Mammary epithelial cell (primary cell): ENCODE measurements at regions of chr7 and their contacts with region 1.

Region 1: DNA sequence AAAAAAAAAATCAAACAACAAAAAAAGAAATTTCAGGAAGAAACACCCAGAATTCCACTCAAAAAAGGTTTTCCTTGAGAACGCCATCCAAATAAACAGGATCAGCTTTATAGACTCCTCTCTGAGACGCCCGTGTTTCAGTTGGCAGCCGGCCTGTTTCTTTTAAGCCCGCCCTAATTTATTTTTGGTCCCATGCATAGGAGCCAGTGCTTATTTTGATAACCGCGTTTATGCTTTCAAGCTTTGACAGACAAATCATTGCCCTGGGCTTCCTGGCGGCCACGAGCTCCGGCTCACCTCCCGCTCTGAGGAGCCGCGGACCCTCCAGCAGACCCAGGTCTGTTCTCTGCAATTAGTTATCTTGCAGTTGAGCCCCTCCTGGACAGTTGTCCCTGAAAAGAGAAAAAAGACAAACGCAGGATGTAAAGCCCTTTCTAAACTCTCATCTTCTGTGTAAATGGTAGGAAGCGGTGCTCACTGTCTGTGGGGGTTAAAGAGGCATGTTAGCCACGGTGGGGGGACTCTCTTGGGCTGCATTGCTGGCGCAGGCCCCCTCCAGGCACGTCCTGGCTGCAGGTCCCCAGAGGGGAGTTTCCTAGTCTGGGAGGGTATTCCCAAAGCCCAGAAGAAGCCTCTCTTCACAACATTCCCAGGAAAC is 22.2 kb upstream of the UNCX start:
- DNase-seq: no peak
- H3K4me3 ChIP-seq: no peak overlapping the region
- H3K27ac ChIP-seq: no peak overlapping the region
- H3K4me1 ChIP-seq: peaks cover 5% of the 10 kb centered on the region
- H3K27me3 ChIP-seq: peaks cover 29% of the 10 kb centered on the region
- CTCF ChIP-seq: no peak

Region 2: DNA sequence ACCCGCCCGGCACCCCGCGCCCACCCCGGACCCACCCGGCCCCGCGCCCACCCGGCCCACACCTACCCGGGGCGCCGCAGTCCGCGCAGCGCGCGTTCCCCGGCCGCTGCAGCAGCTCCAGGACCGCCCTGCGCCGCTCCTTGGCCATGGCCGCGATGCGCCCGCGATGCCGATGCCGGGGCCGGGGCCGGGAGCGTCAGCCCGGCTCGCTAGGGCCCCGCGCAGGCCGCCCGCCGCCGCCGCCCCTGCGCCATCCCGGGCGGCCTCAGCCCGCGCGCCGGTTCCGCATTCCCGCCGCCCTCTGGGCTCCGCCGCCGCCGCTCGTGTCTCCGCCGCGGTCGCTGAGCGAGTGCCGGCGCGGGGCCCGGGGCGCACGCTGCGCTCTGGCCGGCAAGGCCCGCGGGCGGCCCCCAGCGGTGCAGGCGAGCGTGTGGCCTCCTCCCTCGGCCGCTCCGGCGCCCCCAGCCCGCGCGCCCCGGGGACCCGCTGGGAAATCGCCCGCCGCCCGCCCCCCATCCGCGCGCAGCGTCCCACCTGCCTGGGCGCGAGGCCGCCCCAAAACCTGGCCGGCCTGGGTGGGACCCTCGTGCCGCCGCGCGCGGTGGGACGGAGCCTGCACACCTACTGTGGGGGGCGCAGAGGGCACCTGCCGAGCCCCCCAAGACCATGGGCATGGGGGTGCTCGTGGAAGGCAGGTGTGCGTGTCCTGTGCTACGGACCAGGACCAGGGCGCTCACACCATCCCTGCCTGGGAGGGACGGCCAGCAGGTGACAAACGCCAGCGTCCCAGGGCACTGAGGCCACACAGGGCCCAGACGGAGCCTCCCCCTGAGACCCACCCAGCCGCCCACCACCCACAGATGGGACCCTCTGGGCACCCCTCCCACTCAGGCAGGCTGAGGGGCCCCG is 255.9 kb before region 1 on chr7 and contains the start of gene ADAP1:
- CTCF ChIA-PET with region 1: no interaction called
- dilution Hi-C with region 1: no loop called
- in situ Hi-C with region 1: no loop called
- intact Hi-C with region 1: no loop called
- DNase-seq: peak; percentile 41
- H3K4me3 ChIP-seq: peak within 1 kb of the TSS; percentile 59 to 68 (median 66)
- H3K27ac ChIP-seq: no peak within 1 kb of the TSS
- H3K4me1 ChIP-seq: peaks cover 14% of the 10 kb centered on the region
- H3K27me3 ChIP-seq: no peaks in the 10 kb centered on the region
- CTCF ChIP-seq: peak in 1 of 2 donors; percentile 41
- total RNA-seq, gene ADAP1: 11.0 to 21.4 TPM

Region 3: DNA sequence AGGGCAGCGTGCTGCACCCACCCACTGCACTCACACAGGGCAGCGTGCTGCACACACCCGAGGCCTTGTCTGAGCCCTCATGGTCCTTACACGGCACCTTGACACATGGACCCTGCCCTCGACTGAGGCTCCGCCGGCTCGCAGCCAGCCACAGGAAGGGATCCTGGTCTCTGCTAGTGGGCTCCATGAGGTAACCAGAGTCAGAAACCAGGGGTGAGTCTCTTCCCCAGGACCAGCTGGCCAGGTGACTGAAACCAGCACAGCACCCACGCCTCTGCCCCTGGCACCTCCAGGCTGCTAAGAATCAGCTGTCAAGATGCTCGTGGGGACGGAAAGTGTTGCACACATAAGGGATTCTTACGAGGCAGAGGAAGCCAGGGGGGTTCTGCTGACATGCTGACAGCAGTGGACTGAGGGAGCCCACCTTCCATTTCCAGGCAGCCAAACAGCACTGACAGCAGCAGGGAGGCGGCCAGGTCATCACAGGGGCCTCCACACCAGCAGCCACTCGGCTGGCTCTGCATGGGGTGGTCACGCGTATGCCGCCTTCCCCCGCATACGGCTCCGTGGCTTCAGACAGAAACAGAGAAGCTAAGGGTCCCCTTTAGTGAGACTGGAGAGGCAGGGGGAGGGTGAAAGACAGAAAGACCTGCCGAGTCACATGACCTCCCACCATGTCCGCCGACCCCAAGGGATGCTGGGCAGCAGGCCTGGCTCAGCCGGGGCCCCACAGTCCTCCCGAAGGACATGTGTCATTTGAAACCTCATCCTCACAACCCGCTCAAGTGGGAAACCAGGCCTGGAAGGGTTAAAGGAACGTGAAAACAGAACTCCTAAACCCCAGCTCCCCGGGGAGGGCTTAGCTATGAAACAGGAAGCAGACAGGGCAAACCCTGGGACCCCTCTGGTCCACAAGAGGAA is 88.3 kb before region 1 on chr7:
- CTCF ChIA-PET with region 1: no interaction called
- dilution Hi-C with region 1: no loop called
- in situ Hi-C with region 1: no loop called
- intact Hi-C with region 1: no loop called
- DNase-seq: no peak
- H3K4me3 ChIP-seq: no peak overlapping the region
- H3K27ac ChIP-seq: no peak overlapping the region
- H3K4me1 ChIP-seq: no peaks in the 10 kb centered on the region
- H3K27me3 ChIP-seq: no peaks in the 10 kb centered on the region
- CTCF ChIP-seq: no peak

Region 4: DNA sequence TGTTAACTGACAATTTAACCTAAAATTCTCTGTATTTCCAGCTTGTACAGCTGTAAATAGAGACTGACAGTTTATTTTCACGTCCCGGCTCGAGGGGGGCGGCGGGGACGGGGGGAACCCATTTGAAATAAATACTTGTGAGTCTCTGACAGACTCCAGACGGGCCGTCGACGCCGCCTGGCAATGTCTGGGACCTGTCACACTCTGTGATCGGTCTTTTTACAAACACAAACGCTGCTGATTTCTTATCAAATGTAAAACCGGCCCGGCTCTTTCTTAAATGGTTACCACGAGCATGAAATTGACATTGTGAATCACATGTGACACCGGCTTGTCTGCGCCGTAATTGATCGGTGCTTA is 79.2 kb after region 1 on chr7:
- CTCF ChIA-PET with region 1: no interaction called
- dilution Hi-C with region 1: loop called (anchors 5 kb)
- in situ Hi-C with region 1: no loop called
- intact Hi-C with region 1: no loop called
- DNase-seq: no peak
- H3K4me3 ChIP-seq: no peak overlapping the region
- H3K27ac ChIP-seq: no peak overlapping the region
- H3K4me1 ChIP-seq: peaks cover 4% of the 10 kb centered on the region
- H3K27me3 ChIP-seq: peaks cover 6% of the 10 kb centered on the region
- CTCF ChIP-seq: no peak

Region 5: DNA sequence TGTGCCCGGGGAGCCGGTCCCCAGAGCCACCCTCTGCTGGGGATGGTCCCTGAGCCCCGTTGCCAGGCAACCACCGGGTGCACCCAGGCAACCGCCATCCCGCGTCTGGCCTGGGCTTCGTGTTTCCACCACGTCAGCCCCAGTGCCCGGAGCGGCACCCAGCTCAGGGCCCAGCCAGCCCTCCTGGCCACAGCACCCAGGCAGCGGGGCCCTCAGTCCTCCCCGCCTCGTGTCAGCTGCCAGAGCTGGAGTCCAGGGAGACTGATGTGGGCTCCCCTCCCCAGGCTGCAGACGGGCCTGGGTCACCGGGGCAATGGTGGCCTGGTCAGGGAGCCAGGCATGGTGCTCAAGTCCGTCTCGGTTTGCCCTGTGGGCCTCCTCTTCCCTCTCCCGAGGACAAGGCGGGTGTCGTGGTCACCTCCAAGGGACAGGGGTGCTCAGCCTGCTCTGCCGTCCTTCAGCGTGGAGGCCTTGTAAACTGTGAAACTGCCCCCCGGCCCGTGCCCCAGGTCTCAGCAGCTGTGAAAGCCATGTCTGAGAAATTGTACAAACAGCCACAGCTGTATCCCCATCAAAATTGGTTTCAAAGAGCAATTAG is 176.3 kb after region 1 on chr7:
- CTCF ChIA-PET with region 1: no interaction called
- dilution Hi-C with region 1: loop called (anchors 5 kb)
- in situ Hi-C with region 1: no loop called
- intact Hi-C with region 1: no loop called
- DNase-seq: no peak
- H3K4me3 ChIP-seq: no peak overlapping the region
- H3K27ac ChIP-seq: no peak overlapping the region
- H3K4me1 ChIP-seq: no peaks in the 10 kb centered on the region
- H3K27me3 ChIP-seq: peaks cover 10% of the 10 kb centered on the region
- CTCF ChIP-seq: no peak

Region 6: GRCh38 chr7:1579481-1580421 is 369.3 kb after region 1 on chr7:
- CTCF ChIA-PET with region 1: no interaction called
- dilution Hi-C with region 1: no loop called
- in situ Hi-C with region 1: no loop called
- intact Hi-C with region 1: no loop called
- DNase-seq: peak; percentile 38
- H3K4me3 ChIP-seq: no peak overlapping the region
- H3K27ac ChIP-seq: no peak overlapping the region
- H3K4me1 ChIP-seq: no peaks in the 10 kb centered on the region
- H3K27me3 ChIP-seq: no peaks in the 10 kb centered on the region
- CTCF ChIP-seq: peak; percentile 67 to 85